ENCODE measurements at regions of chr5 and their contacts with region 1.

Region 1: DNA sequence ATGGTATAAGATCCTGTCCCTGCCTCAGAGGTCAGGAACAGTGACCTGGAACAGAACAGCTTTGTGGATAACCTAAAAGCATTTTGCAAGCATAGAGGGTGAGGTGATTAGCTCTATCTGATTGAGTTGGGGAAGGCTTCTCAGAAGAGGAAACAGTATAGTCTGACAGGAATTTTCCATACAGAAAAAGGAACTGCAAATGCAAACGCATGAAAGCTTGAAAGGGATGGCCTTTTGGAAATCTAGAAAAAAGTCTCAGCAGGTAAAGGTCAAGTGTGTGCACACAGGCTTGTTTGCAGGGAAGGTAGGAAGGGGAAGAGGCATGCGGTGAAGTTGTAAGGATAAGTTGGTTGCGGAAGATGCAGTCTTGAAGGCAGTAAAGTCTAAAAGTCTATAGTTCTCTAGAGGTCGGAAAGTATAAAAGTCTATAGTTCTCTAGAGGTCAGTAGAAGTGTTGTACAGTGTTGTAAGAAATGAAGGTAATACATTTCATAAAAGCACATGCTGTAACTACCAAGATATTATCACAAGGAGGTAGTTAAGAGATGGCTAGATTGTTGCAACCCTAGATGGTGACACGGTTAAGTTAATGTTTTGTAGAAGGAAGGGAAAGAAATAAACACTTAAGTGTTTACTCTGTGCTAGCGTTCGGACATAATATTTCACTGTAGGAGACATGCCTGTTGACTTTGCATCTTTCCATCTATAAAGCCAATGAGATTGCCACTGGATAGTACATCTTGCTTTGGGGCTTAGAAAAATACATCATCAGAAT is 16.7 kb upstream of the HSPB3 start:
- DNase-seq: no peak
- H3K4me3 ChIP-seq: no peak overlapping the region
- H3K27ac ChIP-seq: peak overlapping the region in 1 of 4 donors; percentile 7
- H3K4me1 ChIP-seq: peaks cover 0 to 12% (median 3%) of the 10 kb centered on the region in 4 donors
- H3K27me3 ChIP-seq: no peaks in the 10 kb centered on the region
- CTCF ChIP-seq: no peak
- EP300 ChIP-seq: no peak
- POLR2A ChIP-seq: no peak

Region 2: GRCh38 chr5:54135042-54135441 is 303.8 kb before region 1 on chr5:
- in situ Hi-C with region 1: no loop called
- intact Hi-C with region 1: no loop called
- DNase-seq: no peak
- H3K4me3 ChIP-seq: no peak overlapping the region
- H3K27ac ChIP-seq: no peak overlapping the region
- H3K4me1 ChIP-seq: peaks cover 0 to 6% (median 2%) of the 10 kb centered on the region in 4 donors
- H3K27me3 ChIP-seq: no peaks in the 10 kb centered on the region
- CTCF ChIP-seq: no peak
- EP300 ChIP-seq: no peak
- POLR2A ChIP-seq: no peak

Region 3: GRCh38 chr5:54344653-54345052 is 94.2 kb before region 1 on chr5:
- in situ Hi-C with region 1: no loop called
- intact Hi-C with region 1: loop called (anchors 10 kb)
- DNase-seq: no peak
- H3K4me3 ChIP-seq: no peak overlapping the region
- H3K27ac ChIP-seq: no peak overlapping the region
- H3K4me1 ChIP-seq: no peaks in the 10 kb centered on the region
- H3K27me3 ChIP-seq: no peaks in the 10 kb centered on the region
- CTCF ChIP-seq: no peak
- EP300 ChIP-seq: no peak
- POLR2A ChIP-seq: no peak

Region 4: GRCh38 chr5:54470677-54471076 is 31.9 kb after region 1 on chr5:
- in situ Hi-C with region 1: no loop called
- intact Hi-C with region 1: no loop called
- DNase-seq: no peak
- H3K4me3 ChIP-seq: no peak overlapping the region
- H3K27ac ChIP-seq: no peak overlapping the region
- H3K4me1 ChIP-seq: no peaks in the 10 kb centered on the region
- H3K27me3 ChIP-seq: no peaks in the 10 kb centered on the region
- CTCF ChIP-seq: no peak
- EP300 ChIP-seq: no peak
- POLR2A ChIP-seq: no peak

Region 5: GRCh38 chr5:54533541-54534190 is 94.9 kb after region 1 on chr5:
- in situ Hi-C with region 1: no loop called
- intact Hi-C with region 1: no loop called
- DNase-seq: no peak
- H3K4me3 ChIP-seq: no peak overlapping the region
- H3K27ac ChIP-seq: peak overlapping the region; percentile 50 to 78 (median 67)
- H3K4me1 ChIP-seq: peaks cover 0 to 36% (median 19%) of the 10 kb centered on the region in 4 donors
- H3K27me3 ChIP-seq: no peaks in the 10 kb centered on the region
- CTCF ChIP-seq: no peak
- EP300 ChIP-seq: no peak
- POLR2A ChIP-seq: no peak